Caco-2 (cell line): ENCODE measurements at regions of chr9 and their contacts with region 1.

Region 1: DNA sequence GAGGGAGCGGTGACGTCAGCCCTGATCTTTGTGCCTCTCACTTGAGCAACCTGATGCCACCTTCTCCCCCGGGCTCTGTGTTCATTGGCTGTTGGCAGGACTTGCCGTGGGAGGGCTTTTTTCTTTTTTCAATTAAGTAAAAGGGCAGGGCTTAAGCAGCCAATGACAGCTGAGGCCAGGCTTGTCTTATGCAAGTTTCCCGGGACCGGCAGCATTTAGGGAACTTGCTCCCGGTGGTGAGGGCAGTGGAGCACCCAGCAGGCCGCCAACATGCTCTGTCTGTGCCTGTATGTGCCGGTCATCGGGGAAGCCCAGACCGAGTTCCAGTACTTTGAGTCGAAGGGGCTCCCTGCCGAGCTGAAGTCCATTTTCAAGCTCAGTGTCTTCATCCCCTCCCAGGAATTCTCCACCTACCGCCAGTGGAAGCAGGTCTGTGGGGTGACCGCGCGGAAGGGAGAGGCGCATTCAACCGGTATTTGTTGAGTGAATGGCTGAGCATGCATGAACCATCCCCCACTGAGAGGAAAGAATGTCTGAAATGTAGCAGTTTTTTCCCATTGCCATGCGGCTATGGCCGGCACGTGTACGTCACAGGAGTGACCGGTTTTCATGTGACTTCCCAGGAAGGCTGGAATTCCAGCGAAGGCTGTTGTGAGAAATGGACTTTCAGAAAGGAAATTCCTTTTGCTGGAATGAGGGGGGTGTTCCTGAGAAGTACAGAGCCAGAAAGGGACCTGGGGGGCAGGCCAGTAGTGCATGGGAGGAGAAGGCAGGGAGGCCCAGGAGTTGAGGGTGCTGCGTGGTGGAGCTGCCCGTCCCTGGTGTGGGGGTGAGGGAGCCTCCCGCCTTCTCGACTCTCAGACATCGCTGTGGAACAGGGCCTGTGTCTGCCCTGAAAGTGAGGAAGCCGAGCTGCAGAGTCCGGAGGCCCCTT is 29.0 kb downstream of the PTGES2 start:
- DNase-seq: peak; percentile 94 to 97
- H3K4me3 ChIP-seq: peak overlapping the region; percentile 67
- H3K4me3 Mint-ChIP-seq: peak overlapping the region; percentile 99
- H3K27ac Mint-ChIP-seq: peak overlapping the region; percentile 100
- H3K4me1 ChIP-seq: peaks cover 34% of the 10 kb centered on the region
- H3K4me1 Mint-ChIP-seq: peaks cover 18% of the 10 kb centered on the region
- H3K27me3 ChIP-seq: no peaks in the 10 kb centered on the region
- H3K27me3 Mint-ChIP-seq: no peaks in the 10 kb centered on the region
- CTCF ChIP-seq: no peak

Region 2: GRCh38 chr9:128057727-128058398 is 40.7 kb before region 1 on chr9:
- CTCF ChIA-PET with region 1: no interaction called
- POLR2A ChIA-PET with region 1: no interaction called
- intact Hi-C with region 1: no loop called
- DNase-seq: no peak
- H3K4me3 ChIP-seq: no peak overlapping the region
- H3K4me3 Mint-ChIP-seq: no peak overlapping the region
- H3K27ac Mint-ChIP-seq: no peak overlapping the region
- H3K4me1 ChIP-seq: 0 out of 2 replicates have a peak, but pooled peaks cover 3% of the 10 kb centered on the region
- H3K4me1 Mint-ChIP-seq: peaks cover 6% of the 10 kb centered on the region
- H3K27me3 ChIP-seq: no peaks in the 10 kb centered on the region
- H3K27me3 Mint-ChIP-seq: no peaks in the 10 kb centered on the region
- CTCF ChIP-seq: no peak

Region 3: DNA sequence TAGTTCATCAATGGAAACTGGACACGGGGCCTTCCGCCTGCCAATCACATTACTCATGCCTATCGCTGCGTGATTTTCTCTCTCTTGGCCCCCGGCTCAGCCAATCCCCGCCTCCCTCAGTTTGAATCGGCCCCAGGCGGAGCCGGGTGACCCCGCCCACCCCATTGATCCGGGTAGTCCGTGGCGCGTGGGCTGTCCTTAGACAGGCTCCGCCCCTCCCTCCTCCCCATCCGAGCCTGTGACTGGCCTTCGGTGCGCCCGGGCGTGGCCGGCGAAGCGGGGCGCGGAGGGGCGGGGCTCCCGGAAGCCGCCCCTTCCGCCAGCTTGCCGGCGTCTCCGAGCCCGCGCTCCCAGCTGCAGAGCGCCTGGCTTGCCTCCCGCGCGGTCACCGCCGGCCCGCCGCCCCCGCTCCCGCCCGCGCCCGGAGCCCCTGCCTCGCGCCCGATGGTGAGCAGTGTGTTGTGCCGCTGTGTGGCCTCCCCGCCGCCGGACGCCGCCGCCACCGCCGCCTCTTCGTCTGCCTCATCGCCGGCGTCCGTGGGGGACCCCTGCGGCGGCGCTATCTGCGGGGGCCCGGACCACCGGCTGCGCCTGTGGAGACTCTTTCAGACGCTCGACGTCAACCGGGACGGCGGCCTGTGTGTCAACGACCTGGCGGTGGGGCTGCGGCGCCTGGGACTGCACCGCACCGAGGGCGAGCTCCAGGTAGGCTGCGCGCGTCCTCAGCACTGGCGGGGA is 30.5 kb before region 1 on chr9 and contains the start of gene SLC25A25:
- CTCF ChIA-PET with region 1: interaction called, 4 read pairs
- POLR2A ChIA-PET with region 1: interaction called, 7 read pairs
- intact Hi-C with region 1: loop called (anchors 1 kb)
- DNase-seq: peak; percentile 100
- H3K4me3 ChIP-seq: peak within 1 kb of the TSS; percentile 77
- H3K4me3 Mint-ChIP-seq: no peak within 1 kb of the TSS
- H3K27ac Mint-ChIP-seq: peak within 1 kb of the TSS; percentile 63
- H3K4me1 ChIP-seq: peaks cover 24% of the 10 kb centered on the region
- H3K4me1 Mint-ChIP-seq: peaks cover 19% of the 10 kb centered on the region
- H3K27me3 ChIP-seq: no peaks in the 10 kb centered on the region
- H3K27me3 Mint-ChIP-seq: no peaks in the 10 kb centered on the region
- CTCF ChIP-seq: no peak
- total RNA-seq, gene SLC25A25: 16.5 and 18.5 TPM in 2 replicates

Region 4: GRCh38 chr9:128078504-128079434 is 19.8 kb before region 1 on chr9:
- CTCF ChIA-PET with region 1: interaction called, 13 read pairs
- POLR2A ChIA-PET with region 1: interaction called, 11 read pairs
- intact Hi-C with region 1: no loop called
- DNase-seq: peak; percentile 66 to 78
- H3K4me3 ChIP-seq: no peak overlapping the region
- H3K4me3 Mint-ChIP-seq: peak overlapping the region; percentile 56
- H3K27ac Mint-ChIP-seq: peak overlapping the region; percentile 86
- H3K4me1 ChIP-seq: peaks cover 35% of the 10 kb centered on the region
- H3K4me1 Mint-ChIP-seq: peaks cover 34% of the 10 kb centered on the region
- H3K27me3 ChIP-seq: no peaks in the 10 kb centered on the region
- H3K27me3 Mint-ChIP-seq: no peaks in the 10 kb centered on the region
- CTCF ChIP-seq: no peak

Region 5: DNA sequence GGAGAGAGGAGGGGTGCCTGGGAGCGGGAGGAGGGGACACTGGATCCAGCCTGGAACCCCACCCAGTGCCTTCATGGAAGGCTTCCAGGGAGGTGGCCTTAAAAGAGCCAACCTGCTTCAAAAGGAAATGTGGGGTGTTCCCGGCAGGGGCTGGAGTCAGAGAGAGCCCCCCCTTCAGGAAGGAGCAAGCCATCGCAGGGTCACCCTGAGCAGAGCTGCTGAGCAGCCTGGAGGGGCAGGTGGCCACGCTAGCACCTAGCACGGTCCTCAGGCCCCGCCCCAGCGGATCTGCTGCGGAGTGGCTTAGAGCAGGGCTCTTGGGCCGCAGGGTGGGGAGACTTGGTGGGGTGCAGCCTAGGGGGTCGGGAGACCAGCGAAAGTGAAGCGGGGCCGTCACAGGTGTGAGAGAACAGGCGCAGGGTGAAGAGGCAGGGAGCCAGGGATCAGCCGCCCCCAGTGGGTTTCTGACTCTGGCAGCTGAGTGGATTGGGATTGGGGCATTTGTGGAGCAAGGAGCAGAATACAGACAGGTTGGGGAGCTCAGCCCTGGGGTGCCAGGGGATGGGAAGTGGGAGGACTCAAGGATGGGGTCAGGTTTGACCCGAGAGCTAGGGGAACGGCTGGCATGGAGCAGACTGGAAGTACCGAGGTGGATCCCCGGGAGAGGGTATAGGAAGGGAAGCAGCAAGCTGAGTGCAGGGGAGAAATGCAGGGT is 52.2 kb after region 1 on chr9:
- CTCF ChIA-PET with region 1: no interaction called
- POLR2A ChIA-PET with region 1: no interaction called
- intact Hi-C with region 1: no loop called
- DNase-seq: peak; percentile 31 to 43
- H3K4me3 ChIP-seq: no peak overlapping the region
- H3K4me3 Mint-ChIP-seq: no peak overlapping the region
- H3K27ac Mint-ChIP-seq: no peak overlapping the region
- H3K4me1 ChIP-seq: peaks cover 8% of the 10 kb centered on the region; the same call in 1 of the 2 replicates
- H3K4me1 Mint-ChIP-seq: no peaks in the 10 kb centered on the region
- H3K27me3 ChIP-seq: no peaks in the 10 kb centered on the region
- H3K27me3 Mint-ChIP-seq: no peaks in the 10 kb centered on the region
- CTCF ChIP-seq: peak; percentile 13 to 39

Region 6: DNA sequence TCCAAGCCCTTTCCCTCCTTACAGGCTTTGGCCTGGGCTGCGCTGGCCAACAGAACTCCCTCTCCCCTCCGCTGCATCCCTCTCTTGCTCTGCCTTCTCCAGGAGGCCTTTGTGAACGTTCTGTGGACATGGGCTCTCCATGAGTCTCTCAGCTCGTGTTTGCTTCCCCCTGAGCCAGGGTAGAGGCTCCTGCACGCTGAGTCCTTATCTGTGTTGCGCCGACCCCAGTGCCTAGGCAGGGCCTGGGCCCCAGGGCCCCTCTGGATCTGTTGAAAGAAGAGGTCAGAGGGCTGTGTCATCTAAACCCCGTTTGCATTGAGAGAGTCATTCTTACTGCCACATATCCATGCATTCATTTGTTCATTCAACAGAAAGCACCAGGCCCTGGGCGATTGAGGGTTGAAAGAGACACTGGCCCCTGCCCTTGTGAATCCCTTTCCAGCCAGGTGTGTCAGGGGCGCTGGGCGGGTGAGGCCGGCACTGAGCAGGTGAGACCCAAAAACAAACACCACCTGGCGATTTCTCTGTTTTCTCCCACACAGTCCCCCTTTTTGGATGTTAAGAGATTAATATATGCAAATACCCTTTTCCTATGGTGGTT is 1190.7 kb after region 1 on chr9:
- CTCF ChIA-PET with region 1: no interaction called
- POLR2A ChIA-PET with region 1: no interaction called
- intact Hi-C with region 1: no loop called
- DNase-seq: no peak
- H3K4me3 ChIP-seq: no peak overlapping the region
- H3K4me3 Mint-ChIP-seq: no peak overlapping the region
- H3K27ac Mint-ChIP-seq: no peak overlapping the region
- H3K4me1 ChIP-seq: no peaks in the 10 kb centered on the region
- H3K4me1 Mint-ChIP-seq: no peaks in the 10 kb centered on the region
- H3K27me3 ChIP-seq: no peaks in the 10 kb centered on the region
- H3K27me3 Mint-ChIP-seq: no peaks in the 10 kb centered on the region
- CTCF ChIP-seq: no peak